A673 (cell line): ENCODE measurements at regions of chr10 and their contacts with region 1.

Region 1: GRCh38 chr10:14499601-14499904 is 168.8 kb upstream of the FRMD4A start:
- DNase-seq: no peak
- H3K4me3 ChIP-seq: no peak overlapping the region
- H3K27ac ChIP-seq: no peak overlapping the region
- H3K4me1 ChIP-seq: no peaks in the 10 kb centered on the region
- H3K27me3 ChIP-seq: no peaks in the 10 kb centered on the region
- CTCF ChIP-seq: no peak

Region 2: GRCh38 chr10:14822879-14823755 is 323.6 kb after region 1 on chr10:
- CTCF ChIA-PET with region 1: interaction called, 4 read pairs
- POLR2A ChIA-PET with region 1: no interaction called
- intact Hi-C with region 1: loop called (anchors 2 kb)
- DNase-seq: peak; percentile 60
- H3K4me3 ChIP-seq: no peak overlapping the region
- H3K27ac ChIP-seq: no peak overlapping the region
- H3K4me1 ChIP-seq: no peaks in the 10 kb centered on the region
- H3K27me3 ChIP-seq: no peaks in the 10 kb centered on the region
- CTCF ChIP-seq: peak; percentile 71

Region 3: DNA sequence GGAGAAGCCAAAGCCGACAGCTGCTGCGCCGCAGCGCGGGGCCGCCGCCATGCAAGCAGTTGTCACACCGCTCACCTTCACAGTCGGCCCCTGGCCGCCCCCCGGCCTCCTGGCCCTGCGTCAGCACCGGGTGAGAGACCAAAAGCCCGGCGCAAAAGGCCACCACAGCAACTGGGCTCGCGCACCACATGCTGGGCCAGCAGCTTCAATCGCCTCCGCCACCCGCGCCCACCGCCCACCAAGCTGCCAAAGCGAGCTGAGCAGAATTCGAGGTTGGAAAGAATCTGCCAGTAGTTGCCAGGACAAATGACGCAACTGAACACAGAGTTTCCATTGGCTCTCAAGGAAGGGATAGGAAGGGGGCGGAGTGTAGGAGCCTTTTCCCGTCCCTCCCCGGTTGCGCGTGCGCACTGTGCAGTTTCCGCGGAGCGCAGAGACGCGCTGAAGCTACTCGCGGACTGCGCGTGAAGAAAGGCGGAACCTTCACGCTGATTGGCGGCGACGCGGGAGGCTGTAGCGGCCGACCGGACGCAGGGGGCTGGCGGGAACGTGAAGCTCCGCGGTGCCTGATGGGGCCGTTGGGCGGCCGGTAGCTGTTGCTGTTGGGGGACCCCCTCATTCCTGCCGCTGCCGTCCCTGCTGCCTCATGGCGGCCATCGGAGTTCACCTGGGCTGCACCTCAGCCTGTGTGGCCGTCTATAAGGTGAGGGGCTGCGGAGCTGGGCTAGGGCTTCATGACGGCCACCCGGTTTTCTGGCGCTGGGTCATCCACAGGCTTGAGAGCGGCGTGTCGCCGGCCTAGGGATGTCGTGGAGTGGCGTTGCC is 338.4 kb after region 1 on chr10 and contains the starts of genes CDNF, HSPA14 and MSANTD7:
- CTCF ChIA-PET with region 1: no interaction called
- POLR2A ChIA-PET with region 1: interaction called, 3 read pairs
- intact Hi-C with region 1: loop called (anchors 5 kb)
- DNase-seq: peak; percentile 100
- H3K4me3 ChIP-seq: peak within 1 kb of the TSS; percentile 99
- H3K27ac ChIP-seq: peak within 1 kb of the TSS; percentile 94
- H3K4me1 ChIP-seq: peaks cover 7% of the 10 kb centered on the region
- H3K27me3 ChIP-seq: no peaks in the 10 kb centered on the region
- CTCF ChIP-seq: no peak
- total RNA-seq, gene CDNF: 0.34 and 0.83 TPM in 2 replicates
- total RNA-seq, gene HSPA14: 42.2 and 46.9 TPM in 2 replicates
- total RNA-seq, gene MSANTD7: 19.1 and 20.3 TPM in 2 replicates

Region 4: DNA sequence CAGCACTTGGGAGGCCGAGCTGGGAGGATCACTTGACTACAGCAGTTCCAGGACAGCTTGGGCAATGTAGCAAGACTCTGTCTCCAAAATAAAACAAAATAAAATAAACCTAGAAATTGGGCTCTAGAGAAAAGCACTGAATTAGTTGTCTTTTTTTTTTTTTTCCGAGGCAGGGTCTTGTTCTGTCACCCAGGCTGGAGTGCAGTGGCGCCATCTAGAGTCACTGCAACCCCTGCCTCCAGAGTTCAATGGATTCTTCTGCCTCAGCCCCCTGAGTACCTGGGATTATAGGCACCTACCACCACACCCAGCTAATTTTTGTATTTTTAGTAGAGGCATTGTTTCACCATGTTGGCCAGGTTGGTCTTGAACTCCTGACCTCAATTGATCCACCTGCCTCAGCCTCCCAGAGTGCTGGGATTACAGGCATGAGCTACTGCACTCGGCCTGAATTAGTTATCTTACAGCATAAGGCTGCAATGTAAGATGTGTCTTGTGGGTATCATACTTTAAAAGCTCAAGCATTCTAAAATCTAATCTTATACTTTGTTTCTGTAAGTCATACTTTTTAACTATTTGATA is 472.4 kb after region 1 on chr10:
- CTCF ChIA-PET with region 1: no interaction called
- POLR2A ChIA-PET with region 1: no interaction called
- intact Hi-C with region 1: loop called (anchors 2 kb)
- DNase-seq: peak; percentile 46
- H3K4me3 ChIP-seq: no peak overlapping the region
- H3K27ac ChIP-seq: no peak overlapping the region
- H3K4me1 ChIP-seq: no peaks in the 10 kb centered on the region
- H3K27me3 ChIP-seq: no peaks in the 10 kb centered on the region
- CTCF ChIP-seq: peak; percentile 80

Region 5: DNA sequence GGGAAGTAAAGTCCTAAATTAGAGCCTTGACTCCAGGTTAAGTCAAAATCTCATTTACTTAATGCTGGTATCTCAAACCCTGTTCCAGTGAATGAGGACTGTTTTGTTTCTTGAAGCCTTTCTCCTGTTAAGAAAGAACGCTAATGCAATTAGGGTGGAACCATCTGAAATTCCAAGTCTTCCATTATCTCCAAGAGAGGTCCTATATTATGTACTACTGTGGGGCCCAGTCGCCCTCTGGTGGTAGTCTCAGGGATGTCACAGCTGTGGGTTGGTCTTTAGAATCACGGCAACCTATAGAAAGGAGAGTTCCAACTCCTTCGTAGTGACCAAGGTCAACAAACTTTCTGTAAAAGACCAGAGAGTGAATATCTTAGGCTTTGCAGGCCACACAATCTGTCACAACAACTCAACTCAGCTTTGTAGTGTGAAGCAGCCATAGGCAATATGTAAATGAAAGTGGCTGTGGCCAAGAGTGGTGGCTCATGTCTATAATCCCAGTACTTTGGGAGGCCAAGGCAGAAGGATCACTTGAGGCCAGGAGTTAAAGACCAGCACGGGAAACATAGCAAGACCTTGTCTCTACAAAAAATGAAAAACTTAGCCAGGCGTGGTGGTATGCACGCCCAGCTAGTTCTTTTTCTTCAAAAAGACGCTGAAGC is 606.9 kb after region 1 on chr10:
- CTCF ChIA-PET with region 1: no interaction called
- POLR2A ChIA-PET with region 1: no interaction called
- intact Hi-C with region 1: loop called (anchors 2 kb)
- DNase-seq: peak; percentile 86
- H3K4me3 ChIP-seq: no peak overlapping the region
- H3K27ac ChIP-seq: no peak overlapping the region
- H3K4me1 ChIP-seq: peaks cover 4% of the 10 kb centered on the region
- H3K27me3 ChIP-seq: no peaks in the 10 kb centered on the region
- CTCF ChIP-seq: peak; percentile 98